KBM-7 (cell line): ENCODE measurements at regions of chr15 and their contacts with region 1.

Region 1: GRCh38 chr15:76576523-76577279 is 240.1 kb downstream of the ISL2 start:
- DNase-seq: peak; percentile 24

Region 2: DNA sequence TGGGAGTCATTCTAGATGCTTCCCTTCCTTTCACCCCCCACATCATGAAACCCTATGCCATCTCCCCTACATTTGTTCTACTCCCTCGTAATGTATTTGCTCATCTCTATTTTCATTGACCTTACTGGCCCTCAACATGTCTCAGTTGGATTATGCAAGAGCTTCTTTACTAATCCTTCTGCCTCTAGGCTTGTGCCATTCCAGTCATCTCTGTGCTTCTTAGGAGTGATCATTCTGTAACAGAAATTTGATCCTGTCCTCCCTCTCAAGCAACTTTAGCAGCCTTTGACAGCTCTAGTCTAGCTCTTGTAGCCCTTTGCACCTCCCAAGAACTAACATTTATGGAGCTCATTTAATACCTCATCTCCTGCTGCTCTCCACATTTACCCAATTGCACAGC is 175.4 kb before region 1 on chr15:
- in situ Hi-C with region 1: no loop called
- DNase-seq: no peak

Region 3: DNA sequence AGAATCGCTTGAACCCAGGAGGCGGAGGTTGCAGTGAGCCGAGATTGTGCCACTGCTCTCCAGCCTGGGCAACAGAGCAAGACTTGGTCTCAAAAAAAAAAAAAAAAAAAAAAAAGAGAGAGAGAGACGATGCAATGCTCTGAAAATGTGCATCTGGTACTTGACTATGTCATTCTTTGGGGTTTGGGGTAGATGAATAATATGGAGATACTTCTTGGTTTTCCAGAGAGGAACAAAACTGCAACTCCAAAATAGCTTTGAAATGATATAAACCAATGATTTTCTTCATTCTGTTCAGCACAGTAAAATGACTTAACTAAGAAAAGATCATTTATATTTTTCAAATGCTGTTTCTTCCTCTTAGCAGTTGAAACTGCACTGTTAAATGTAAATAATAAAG is 81.2 kb before region 1 on chr15:
- in situ Hi-C with region 1: loop called (anchors 25 kb)
- DNase-seq: no peak